Activated naive CD8-positive, alpha-beta T cell treated with anti-CD3 and anti-CD28 coated beads, Interleukin-2, amount 10 ng/mL, durations not matched to agents 7 days and 5 days (primary cell): ENCODE measurements at regions of chr3 and their contacts with region 1.

Region 1: DNA sequence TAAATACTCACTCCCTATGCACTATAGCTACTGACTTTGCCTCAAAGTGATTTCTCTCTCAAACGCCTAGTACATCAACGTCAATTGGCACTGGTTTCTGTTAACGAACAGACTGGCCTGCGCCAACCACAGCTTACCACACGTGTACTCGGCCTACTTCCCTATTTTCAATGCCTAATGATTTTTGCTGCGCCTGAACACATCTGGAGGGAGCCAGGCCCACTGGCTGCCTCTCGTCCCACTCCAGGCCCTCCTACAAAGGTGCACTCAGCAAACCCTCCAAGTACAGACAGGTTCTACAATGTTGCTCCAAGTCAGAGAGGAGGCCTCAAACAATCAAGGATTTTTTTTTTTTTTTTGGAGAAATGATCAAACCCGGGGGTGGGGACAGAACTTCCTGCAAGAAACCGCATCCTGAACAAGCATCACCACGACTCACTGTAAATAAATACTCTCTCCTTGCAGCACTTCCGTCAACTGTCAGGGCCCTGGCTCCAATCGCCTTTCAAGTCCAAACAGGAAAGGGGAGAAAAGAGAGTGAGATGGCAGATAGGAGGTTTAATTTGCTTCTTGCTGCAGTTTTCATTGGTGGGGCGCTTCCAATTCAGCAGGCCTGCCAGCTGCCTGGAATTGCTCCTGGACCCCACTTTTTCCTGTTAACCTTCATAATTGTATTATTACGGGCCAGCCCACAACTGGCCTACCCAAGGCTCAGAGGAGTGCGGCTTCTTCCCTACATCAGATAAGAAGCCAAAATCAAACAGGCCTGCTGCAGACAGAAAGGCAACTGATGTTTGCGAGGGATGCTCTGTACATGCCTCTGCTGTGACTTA is 139.3 kb downstream of the FOXP1 start:
- DNase-seq: peak; percentile 73
- ATAC-seq: peak; percentile 72
- H3K4me3 Mint-ChIP-seq: peak overlapping the region; percentile 79
- H3K27ac Mint-ChIP-seq: peak overlapping the region; percentile 98
- H3K4me1 Mint-ChIP-seq: peaks cover 76% of the 10 kb centered on the region
- H3K27me3 Mint-ChIP-seq: no peaks in the 10 kb centered on the region

Region 2: GRCh38 chr3:71064288-71064955 is 379.8 kb before region 1 on chr3:
- POLR2A ChIA-PET with region 1: interaction called, 12 read pairs
- DNase-seq: peak; percentile 84
- ATAC-seq: peak; percentile 46
- H3K4me3 Mint-ChIP-seq: no peak overlapping the region
- H3K27ac Mint-ChIP-seq: no peak overlapping the region
- H3K4me1 Mint-ChIP-seq: peaks cover 49% of the 10 kb centered on the region
- H3K27me3 Mint-ChIP-seq: no peaks in the 10 kb centered on the region

Region 3: DNA sequence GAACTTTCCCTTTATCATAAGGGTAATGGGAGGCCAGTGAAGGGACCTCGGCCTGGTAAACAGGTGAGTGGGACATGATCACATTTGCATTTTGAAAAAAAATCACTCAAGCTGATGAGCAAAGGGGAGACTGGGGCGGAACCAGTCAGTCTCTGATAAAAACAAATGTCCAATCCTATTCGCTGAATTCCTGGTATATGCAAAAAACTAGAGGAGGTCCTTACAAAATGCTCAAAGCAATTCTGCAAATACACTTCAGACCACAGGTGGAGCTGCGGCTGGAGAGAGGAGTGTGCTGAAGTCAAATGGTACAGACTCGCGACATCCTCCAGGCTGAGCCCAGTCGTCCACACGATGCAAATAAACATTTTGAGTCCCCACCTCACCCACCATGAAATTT is 27.4 kb before region 1 on chr3:
- POLR2A ChIA-PET with region 1: interaction called, 41 read pairs
- DNase-seq: peak; percentile 57
- ATAC-seq: peak; percentile 79
- H3K4me3 Mint-ChIP-seq: peak overlapping the region; percentile 80
- H3K27ac Mint-ChIP-seq: peak overlapping the region; percentile 93
- H3K4me1 Mint-ChIP-seq: peaks cover 65% of the 10 kb centered on the region
- H3K27me3 Mint-ChIP-seq: no peaks in the 10 kb centered on the region

Region 4: DNA sequence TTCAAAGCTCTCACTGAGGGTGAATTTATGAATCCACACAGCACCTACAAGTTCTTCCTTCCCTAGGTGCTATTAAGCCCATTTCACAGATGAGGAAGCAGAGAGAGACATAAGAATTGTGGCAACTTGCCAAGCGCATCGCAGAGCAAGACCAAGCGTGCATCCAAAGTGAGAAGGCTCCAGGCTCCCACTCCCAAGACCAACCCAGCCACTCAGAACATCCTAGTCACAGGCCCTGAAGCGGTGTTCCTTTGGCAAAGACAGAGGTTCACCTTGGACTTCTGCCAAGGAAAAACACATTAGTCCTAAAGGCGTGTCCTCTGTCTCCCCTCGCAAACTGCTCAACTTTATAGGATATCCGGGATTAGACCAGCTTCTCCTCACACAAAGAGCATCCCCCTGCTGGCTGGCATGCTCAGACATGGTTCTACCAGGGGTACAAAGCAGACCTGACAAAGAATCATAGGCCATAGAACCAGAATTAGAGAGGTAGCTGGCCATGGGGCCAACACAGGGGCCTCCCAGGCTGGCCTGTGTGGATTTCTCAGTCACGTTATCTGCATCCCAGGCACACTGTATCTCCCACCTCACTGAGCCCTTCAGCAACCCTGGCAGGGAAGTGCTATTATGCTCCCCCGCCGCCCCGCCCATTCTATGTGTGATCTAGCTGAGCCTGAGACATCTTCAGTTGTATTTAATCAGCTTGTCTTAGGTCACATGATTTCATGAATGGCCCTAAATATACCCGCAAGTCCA is 20.9 kb before region 1 on chr3:
- POLR2A ChIA-PET with region 1: interaction called, 60 read pairs
- DNase-seq: no peak
- ATAC-seq: no peak
- H3K4me3 Mint-ChIP-seq: peak overlapping the region; percentile 72
- H3K27ac Mint-ChIP-seq: peak overlapping the region; percentile 97
- H3K4me1 Mint-ChIP-seq: peaks cover 70% of the 10 kb centered on the region
- H3K27me3 Mint-ChIP-seq: no peaks in the 10 kb centered on the region

Region 5: GRCh38 chr3:71428841-71429596 is 15.2 kb before region 1 on chr3:
- POLR2A ChIA-PET with region 1: interaction called, 60 read pairs
- DNase-seq: no peak
- ATAC-seq: peak; percentile 39
- H3K4me3 Mint-ChIP-seq: peak overlapping the region; percentile 75
- H3K27ac Mint-ChIP-seq: peak overlapping the region; percentile 85
- H3K4me1 Mint-ChIP-seq: peaks cover 82% of the 10 kb centered on the region
- H3K27me3 Mint-ChIP-seq: no peaks in the 10 kb centered on the region

Region 6: GRCh38 chr3:71456156-71456555 is 11.9 kb after region 1 on chr3:
- POLR2A ChIA-PET with region 1: interaction called, 98 read pairs
- DNase-seq: no peak
- ATAC-seq: peak; percentile 21
- H3K4me3 Mint-ChIP-seq: peak overlapping the region; percentile 79
- H3K27ac Mint-ChIP-seq: peak overlapping the region; percentile 95
- H3K4me1 Mint-ChIP-seq: peaks cover 72% of the 10 kb centered on the region
- H3K27me3 Mint-ChIP-seq: no peaks in the 10 kb centered on the region

Region 7: DNA sequence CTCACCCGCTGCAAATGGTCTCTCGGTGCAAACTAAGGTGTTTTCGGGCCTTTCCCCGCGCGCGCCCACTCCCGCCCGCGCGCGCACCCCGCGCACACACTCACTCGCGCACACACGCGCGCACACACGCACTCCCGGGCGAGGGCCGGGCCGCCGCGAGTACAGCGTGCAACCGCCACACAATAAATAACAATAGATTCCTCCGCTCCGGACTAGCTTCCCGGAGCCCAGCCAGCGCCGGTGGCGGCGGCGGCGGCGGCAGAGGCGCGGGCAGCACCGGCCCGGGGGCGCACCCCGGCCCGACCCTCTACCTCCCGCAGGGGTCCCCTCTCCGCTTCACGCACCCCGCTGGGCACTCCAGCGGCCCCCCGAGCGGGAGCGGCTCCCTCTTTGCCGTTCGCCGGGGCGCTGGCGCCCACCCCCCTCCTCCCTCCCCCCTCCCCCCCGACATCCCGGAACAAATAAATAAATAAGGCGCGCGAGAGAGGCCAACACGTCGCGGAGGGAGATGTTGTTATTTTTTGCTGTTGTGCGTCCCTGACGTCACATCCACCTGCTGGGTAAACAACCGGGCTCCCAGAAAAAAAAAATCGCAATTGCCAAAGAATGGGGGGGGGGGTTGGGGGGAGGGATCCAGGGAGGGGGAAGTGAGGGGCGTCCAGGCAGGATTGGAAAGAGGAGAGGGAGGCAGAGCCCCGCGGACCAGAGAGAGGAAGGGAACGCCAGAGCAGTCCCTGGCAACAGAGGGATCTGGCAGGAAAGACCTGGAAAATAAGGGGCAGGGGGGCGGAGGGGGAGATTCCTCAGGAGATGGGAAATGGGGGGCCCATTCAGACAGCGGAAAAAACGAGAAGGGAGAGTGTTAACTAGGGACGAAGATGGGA is 139.6 kb after region 1 on chr3 and contains the start of gene FOXP1:
- POLR2A ChIA-PET with region 1: interaction called, 10 read pairs
- DNase-seq: peak; percentile 78
- ATAC-seq: peak; percentile 48
- H3K4me3 Mint-ChIP-seq: peak within 1 kb of the TSS; percentile 98
- H3K27ac Mint-ChIP-seq: peak within 1 kb of the TSS; percentile 99
- H3K4me1 Mint-ChIP-seq: peaks cover 35% of the 10 kb centered on the region
- H3K27me3 Mint-ChIP-seq: no peaks in the 10 kb centered on the region
- total RNA-seq, gene FOXP1: 178 TPM